ENCODE measurements at regions of chr1 and their contacts with region 1.

Region 1: DNA sequence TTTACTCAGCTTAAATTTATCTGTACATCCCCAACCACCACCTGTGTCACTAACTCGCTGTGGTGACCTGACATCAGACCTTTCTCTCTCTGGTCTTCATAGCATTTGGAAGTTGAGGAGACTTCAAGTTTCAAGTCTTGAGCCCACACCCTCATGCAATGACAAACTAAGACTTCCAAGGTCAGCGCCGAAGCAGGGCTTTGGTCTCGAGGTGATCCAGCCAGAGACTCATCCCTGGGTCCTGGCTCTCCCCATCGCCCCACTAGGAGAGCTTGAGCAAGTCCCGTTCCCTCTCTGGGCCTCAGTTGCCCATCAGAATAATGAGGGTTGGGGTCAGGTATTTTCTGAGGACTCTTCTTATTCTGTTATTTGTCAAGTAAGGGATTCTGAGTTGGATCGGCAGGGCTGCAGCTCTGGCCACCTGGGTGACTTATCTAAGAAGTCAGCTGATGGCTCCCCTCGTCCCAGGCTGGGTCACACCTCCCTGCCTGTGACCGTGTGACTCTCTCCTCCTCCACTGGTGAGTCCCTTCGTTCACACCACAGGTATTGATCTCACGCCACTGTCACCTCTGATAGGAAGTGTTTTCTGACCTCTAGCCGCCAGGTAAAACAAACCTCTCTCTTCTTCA is 143.7 kb upstream of the RUNX3 start:
- DNase-seq: peak in 1 of 2 donors; percentile 45
- H3K4me3 ChIP-seq: no peak overlapping the region
- H3K27ac ChIP-seq: no peak overlapping the region
- H3K4me1 ChIP-seq: no peaks in the 10 kb centered on the region
- H3K27me3 ChIP-seq: no peaks in the 10 kb centered on the region
- CTCF ChIP-seq: no peak
- POLR2A ChIP-seq: no peak

Region 2: DNA sequence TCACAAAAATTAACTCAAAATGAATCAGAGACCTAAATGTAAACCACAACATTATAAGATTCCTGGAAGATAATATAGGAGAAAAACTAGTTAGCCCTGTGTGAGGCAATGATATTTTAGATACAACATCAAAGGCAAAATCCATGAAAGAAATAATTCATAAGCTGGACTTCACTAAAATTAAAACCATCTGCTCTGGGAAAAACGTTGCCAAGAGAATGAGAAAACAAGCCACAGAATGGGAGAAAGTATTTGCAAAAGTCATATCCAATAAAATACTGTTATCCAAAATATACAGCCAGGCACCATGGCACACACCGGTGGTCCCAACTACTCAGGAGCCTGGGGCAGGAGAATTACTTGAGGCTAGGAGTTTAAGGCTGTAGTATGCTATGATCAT is 88.2 kb after region 1 on chr1:
- intact Hi-C with region 1: no loop called
- DNase-seq: no peak
- H3K4me3 ChIP-seq: no peak overlapping the region
- H3K27ac ChIP-seq: no peak overlapping the region
- H3K4me1 ChIP-seq: no peaks in the 10 kb centered on the region
- H3K27me3 ChIP-seq: no peaks in the 10 kb centered on the region
- CTCF ChIP-seq: no peak
- POLR2A ChIP-seq: no peak

Region 3: DNA sequence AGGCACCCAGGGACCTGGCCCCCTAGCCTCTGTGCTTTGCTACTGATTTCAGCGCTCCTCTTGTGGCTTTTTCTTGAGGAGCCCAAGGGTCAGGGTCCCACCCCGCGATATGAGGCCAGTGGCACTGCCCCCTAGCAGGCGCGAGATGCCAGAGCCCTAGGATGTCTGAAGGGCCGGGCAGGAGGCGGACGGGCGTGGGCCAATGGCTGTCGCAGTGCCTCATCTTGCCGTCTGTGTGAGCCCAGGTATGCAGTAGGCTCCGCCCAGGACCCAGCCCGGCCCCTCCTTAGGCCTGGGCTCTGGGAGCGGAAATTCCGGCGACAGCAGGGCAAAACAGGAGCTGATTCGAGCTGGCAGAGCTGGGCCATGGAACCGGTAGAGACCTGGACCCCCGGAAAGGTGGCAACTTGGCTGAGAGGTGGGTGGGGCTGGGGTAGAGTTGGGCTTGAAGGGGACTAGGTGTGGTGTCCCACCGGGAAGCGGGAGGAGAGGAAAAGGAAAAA is 1103.5 kb after region 1 on chr1 and contains the start of gene CNKSR1:
- intact Hi-C with region 1: loop called (anchors 5 kb)
- DNase-seq: peak; percentile 82 to 85
- H3K4me3 ChIP-seq: peak within 1 kb of the TSS in 2 of 3 donors; percentile 61
- H3K27ac ChIP-seq: peak within 1 kb of the TSS; percentile 59 to 78
- H3K4me1 ChIP-seq: no peaks in the 10 kb centered on the region
- H3K27me3 ChIP-seq: no peaks in the 10 kb centered on the region
- CTCF ChIP-seq: no peak
- POLR2A ChIP-seq: no peak
- total RNA-seq, gene CNKSR1: 2.2 to 28.2 (median 22.3) TPM

Measured in breast epithelium (tissue), 4 donors.